ENCODE measurements at regions of chr7 and their contacts with region 1.

Region 1: DNA sequence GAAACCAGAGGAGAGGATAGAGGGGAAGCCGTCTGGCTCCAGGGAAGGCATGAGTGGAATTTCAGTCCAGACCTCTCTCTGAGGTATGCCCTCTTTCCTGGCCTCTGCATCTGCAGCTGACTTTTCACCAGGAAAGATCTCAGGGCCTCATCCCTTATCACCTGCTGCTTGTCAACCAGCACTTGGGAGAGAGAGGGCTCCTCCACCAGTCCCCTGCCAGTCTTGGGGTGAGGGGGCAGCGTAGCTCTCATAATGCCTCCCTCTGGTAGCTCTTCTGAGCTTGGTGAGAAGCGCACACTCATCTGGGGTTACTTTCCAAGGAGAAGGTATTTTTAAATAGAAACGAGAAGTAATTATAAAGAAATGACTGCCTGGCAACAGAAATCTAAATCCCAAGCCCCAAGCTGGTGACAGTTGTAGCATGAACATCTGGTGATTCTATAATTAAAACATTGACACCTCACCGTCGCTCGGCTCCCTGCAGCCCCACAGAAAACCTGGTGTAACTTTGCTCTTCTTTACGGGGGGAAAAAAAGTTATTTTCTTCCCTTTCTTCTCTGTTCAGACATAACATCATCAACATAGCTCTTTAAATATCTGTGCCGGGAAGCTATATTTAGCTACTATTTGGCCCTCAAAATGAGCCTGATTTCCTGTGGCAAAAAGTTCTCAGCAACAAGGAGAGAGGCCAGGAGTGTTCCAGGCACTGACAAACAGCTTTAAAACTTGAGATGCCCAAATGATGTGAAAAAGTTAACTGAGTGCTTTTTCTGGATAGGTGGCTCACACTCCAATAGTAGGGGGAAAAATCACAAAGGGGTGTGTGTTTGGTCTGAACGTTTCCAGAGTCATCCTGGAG is 26.9 kb downstream of the HIP1 start:
- DNase-seq: peak in 4 of 5 donors; percentile 24 to 38 (median 35)
- ATAC-seq: peak; percentile 79 to 88 (median 82)
- H3K4me3 ChIP-seq: peak overlapping the region in 8 of 12 donors; percentile 3 to 31 (median 19)
- H3K27ac ChIP-seq: peak overlapping the region; percentile 71 to 95 (median 82)
- H3K4me1 ChIP-seq: peaks cover 6 to 39% (median 30%) of the 10 kb centered on the region in 12 donors
- H3K27me3 ChIP-seq: no peaks in the 10 kb centered on the region
- CTCF ChIP-seq: no peak
- POLR2A ChIP-seq: no peak

Region 2: GRCh38 chr7:75650681-75651080 is 61.2 kb before region 1 on chr7:
- intact Hi-C with region 1: loop called in 2 of 10 experiments (anchors 5 to 10 kb)
- DNase-seq: peak; percentile 53 to 76 (median 68)
- ATAC-seq: peak; percentile 66 to 93 (median 88)
- H3K4me3 ChIP-seq: no peak overlapping the region
- H3K27ac ChIP-seq: peak overlapping the region in 9 of 12 donors; percentile 1 to 63 (median 54)
- H3K4me1 ChIP-seq: peaks cover 0 to 26% (median 13%) of the 10 kb centered on the region in 12 donors
- H3K27me3 ChIP-seq: no peaks in the 10 kb centered on the region
- CTCF ChIP-seq: no peak
- POLR2A ChIP-seq: no peak

Region 3: GRCh38 chr7:76133164-76133775 is 421.4 kb after region 1 on chr7:
- intact Hi-C with region 1: no loop called
- DNase-seq: no peak
- ATAC-seq: no peak
- H3K4me3 ChIP-seq: no peak overlapping the region
- H3K27ac ChIP-seq: no peak overlapping the region
- H3K4me1 ChIP-seq: peaks cover 0 to 10% (median 0%) of the 10 kb centered on the region in 12 donors
- H3K27me3 ChIP-seq: peaks cover 0 to 11% (median 0%) of the 10 kb centered on the region in 9 donors
- CTCF ChIP-seq: no peak
- POLR2A ChIP-seq: no peak

Measured in heart left ventricle (tissue), 16 donors.